ENCODE measurements at regions of chr11 and their contacts with region 1.

Region 1: DNA sequence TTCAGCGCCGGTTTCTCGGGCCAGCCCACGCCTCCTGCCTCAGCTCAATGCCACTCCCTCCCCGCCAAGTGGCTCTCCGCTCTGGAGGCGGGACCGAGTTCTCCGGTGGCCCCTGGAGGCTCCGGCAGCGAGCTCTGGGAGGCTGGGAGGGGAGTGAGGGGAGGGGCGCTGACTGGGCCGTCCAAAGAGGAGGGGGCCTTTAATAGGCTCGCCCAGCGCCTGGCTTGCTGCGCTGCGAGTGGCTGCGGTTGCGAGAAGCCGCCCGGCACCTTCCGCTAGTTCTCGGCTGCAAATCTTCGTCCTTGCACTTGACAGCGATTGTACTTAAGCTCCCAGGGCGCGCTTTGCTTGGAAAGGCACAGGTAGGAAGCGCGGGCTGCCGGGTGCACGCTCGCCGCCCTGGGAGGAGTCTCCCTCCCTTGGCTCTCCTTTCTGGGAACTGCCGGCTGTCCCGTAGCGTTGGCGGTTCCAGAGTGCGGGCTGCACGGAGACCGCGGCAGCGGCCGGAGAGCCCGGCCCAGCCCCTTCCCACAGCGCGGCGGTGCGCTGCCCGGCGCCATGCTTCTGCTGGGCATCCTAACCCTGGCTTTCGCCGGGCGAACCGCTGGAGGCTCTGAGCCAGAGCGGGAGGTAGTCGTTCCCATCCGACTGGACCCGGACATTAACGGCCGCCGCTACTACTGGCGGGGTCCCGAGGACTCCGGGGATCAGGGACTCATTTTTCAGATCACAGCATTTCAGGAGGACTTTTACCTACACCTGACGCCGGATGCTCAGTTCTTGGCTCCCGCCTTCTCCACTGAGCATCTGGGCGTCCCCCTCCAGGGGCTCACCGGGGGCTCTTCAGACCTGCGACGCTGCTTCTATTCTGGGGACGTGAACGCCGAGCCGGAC is at the start of gene ADAMTS15:
- DNase-seq: peak; percentile 95 to 97 (median 97)
- ATAC-seq: peak; percentile 90 to 92
- H3K4me3 ChIP-seq: peak within 1 kb of the TSS; percentile 70
- H3K27ac ChIP-seq: peak within 1 kb of the TSS; percentile 64
- H3K4me1 ChIP-seq: peaks cover 1% of the 10 kb centered on the region
- H3K27me3 ChIP-seq: no peaks in the 10 kb centered on the region
- total RNA-seq, gene ADAMTS15: 13.4 to 30.2 (median 30.0) TPM

Region 2: DNA sequence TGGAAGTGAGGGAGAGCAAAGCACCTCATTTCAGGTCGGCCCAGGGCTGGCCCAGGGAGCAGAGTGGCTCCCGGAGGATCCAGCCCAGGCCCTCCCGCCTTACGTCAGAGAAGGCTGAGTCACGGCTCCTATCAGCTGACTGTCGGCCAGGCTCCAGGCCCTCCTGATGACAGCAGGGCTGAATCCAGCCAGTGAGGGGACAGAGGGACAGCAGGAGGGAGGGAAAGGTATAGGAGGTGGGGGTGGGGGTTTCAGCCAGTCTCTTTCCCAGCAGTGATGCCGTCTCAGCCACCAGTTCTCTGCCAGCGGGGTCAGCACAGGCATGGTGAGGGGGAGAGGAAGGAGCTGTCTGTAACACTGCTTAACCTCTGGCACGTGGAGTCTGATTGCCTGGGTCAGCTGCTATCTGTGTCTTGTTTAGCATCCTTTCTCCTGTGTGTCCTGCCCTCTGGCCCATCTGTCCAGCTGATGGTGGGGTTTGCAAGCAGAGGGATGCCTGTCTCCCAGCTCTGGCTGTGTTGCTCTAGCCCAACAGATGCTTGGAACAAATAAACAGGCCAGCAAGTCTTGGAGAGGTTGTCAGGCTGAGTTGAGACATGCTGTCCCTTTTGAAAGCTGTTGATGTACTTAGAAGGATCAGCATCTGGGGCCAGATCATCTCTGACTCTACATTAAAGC is 73.8 kb after region 1 on chr11:
- intact Hi-C with region 1: loop called in 2 of 4 experiments (anchors 5 to 10 kb)
- DNase-seq: peak; percentile 96 to 98 (median 96)
- ATAC-seq: peak; percentile 94 to 95
- H3K4me3 ChIP-seq: no peak overlapping the region
- H3K27ac ChIP-seq: peak overlapping the region; percentile 77
- H3K4me1 ChIP-seq: peaks cover 24% of the 10 kb centered on the region
- H3K27me3 ChIP-seq: no peaks in the 10 kb centered on the region

Region 3: DNA sequence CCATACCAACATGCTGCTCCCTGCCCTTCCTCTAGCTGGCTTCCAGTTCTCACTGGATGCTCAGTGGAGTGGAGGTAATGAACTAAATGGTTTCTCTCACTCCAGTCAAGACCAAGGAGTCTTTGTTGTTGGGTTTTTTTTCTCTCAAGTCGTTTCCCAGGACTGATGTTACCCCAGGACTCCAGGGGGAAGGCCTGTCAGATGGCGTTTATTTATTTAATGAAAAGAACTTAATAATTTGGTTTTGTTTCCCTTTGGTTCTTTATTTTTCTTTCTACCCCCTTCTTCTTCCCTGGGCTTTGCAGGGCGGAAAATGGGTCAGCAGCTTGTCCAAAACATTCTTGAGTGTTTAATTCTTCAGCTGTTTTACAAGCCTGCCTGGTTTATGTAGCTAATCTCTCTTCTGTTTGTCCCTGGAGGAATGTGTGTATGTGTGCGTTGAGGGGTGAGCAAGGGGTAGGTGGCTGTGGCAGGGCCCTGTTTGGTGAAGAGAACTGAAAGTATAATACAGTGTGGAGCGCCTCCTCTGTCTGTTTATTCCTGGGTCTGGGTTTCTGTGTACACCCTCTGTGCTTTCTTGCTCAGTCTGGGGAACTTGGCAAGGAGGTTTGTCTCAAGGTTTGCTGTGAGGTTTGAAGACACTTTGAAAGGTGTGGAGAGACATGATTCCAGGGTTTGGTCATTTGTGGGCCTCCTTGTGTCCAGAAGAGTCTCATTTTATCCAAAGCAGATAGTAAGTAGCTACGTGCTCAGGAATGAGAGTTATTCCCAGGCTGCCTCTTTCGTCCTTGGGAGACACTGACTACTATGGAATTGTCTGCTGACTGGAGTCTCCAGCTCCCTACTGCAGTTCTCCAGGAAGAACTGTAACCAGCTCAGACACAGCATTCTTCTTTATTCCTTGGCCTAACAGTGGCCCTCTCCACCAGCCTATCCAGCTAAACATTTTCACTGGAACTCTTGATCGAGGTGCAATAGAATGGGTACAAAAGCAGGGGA is 175.3 kb after region 1 on chr11:
- intact Hi-C with region 1: no loop called
- DNase-seq: peak in 1 of 3 donors; percentile 55
- ATAC-seq: peak; percentile 79 to 84
- H3K4me3 ChIP-seq: no peak overlapping the region
- H3K27ac ChIP-seq: peak overlapping the region; percentile 53
- H3K4me1 ChIP-seq: peaks cover 9% of the 10 kb centered on the region
- H3K27me3 ChIP-seq: no peaks in the 10 kb centered on the region

Region 4: GRCh38 chr11:130644187-130644586 is 195.5 kb after region 1 on chr11:
- intact Hi-C with region 1: loop called in 1 of 4 experiments (anchors 10 kb)
- DNase-seq: no peak
- ATAC-seq: peak in 1 of 2 donors; percentile 6
- H3K4me3 ChIP-seq: no peak overlapping the region
- H3K27ac ChIP-seq: no peak overlapping the region
- H3K4me1 ChIP-seq: peaks cover 6% of the 10 kb centered on the region
- H3K27me3 ChIP-seq: no peaks in the 10 kb centered on the region

Region 5: GRCh38 chr11:130653838-130654636 is 205.4 kb after region 1 on chr11:
- intact Hi-C with region 1: loop called in 3 of 4 experiments (anchors 5 to 10 kb)
- DNase-seq: peak; percentile 90 to 96 (median 94)
- ATAC-seq: peak; percentile 97 to 98
- H3K4me3 ChIP-seq: no peak overlapping the region
- H3K27ac ChIP-seq: peak overlapping the region; percentile 63
- H3K4me1 ChIP-seq: peaks cover 18% of the 10 kb centered on the region
- H3K27me3 ChIP-seq: no peaks in the 10 kb centered on the region

Region 6: DNA sequence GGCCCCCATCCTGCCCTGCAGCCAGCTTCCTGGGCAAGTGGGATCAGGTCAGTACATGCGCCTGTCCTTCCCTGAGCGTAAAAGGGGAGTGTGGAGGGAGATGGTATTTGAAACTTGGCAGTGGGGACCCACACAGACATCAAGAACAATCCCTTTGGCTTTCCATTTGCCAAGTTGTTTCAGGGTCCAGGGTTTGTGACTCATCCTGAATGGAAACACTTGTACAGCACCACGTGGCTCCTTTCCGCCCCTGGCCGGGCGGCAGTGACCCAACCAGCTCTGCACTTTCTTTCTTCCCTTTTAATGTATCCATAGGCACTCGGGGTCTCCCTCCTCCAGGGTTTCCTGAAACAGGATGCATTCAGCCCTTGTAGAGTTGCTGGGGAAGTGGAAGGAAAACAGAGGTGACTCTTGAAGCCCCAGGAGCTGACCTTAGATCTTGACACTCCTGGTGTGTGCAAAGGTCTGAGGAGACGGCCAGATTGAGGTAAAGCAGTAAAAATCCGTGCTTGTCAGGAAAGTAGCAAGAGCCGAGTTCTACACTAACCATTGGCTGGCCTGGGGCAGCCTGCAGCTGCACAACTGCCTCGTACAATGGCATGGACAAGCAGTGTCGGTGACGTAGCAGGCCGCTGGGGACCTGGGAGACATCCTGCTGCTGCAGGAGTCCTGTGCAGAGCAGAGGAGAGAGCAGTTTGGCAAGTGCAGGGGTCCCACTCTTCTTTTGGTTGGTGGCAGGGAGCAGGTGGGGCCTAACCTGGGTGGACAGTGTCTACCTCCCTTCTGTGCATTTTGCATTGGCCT is 277.8 kb after region 1 on chr11:
- intact Hi-C with region 1: loop called in 1 of 4 experiments (anchors 2 kb)
- DNase-seq: peak; percentile 67 to 79 (median 75)
- ATAC-seq: peak; percentile 92
- H3K4me3 ChIP-seq: no peak overlapping the region
- H3K27ac ChIP-seq: peak overlapping the region; percentile 49
- H3K4me1 ChIP-seq: peaks cover 5% of the 10 kb centered on the region
- H3K27me3 ChIP-seq: no peaks in the 10 kb centered on the region